BJ (cell line): ENCODE measurements at regions of chr15 and their contacts with region 1.

Region 1: GRCh38 chr15:74787251-74788041 is 5.6 kb downstream of the CSK start:
- DNase-seq: no peak
- H3K4me3 ChIP-seq: no peak overlapping the region
- H3K27me3 ChIP-seq: no peaks in the 10 kb centered on the region
- CTCF ChIP-seq: peak; percentile 71

Region 2: DNA sequence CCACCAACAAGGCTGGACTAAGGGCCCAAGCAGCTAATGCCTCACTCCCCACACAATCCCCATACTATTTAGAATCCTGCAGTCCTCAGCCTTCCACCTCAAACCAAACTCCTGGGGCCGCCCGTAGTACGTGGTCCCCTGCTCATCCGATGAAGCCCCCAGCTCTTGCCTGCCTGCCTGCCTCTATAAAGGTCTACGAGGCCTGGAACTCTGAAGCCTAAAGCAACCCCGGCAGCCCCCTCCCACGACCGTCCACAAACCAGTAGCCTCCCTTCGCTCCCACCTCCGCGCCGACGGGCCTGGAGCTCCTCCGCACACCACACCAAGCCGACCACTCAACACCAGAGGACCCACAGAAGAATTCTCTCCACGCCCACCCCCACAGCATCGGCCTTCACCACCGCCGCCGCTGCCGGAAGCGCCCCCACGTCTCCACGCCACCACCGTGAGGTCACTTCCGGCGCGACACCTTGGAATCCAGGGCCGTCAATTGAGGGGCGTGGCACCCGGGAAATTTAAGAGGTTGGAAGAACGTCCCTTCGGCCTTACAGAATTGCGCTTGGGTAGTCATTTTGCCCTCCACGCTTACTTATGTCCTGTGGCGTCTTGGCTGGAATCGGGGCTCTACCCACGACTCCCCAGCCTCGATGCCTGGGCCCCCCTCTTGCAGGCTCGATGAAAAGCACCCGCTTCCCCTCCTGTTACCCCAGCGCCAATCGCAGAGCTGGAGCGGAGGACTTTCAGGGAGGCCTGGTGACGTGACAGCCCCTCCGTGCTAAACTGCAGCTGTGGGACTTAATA is 91.6 kb before region 1 on chr15 and contains the start of gene EDC3:
- CTCF ChIA-PET with region 1: no interaction called
- POLR2A ChIA-PET with region 1: no interaction called
- DNase-seq: peak; percentile 21
- H3K4me3 ChIP-seq: peak within 1 kb of the TSS; percentile 61
- H3K27me3 ChIP-seq: no peaks in the 10 kb centered on the region
- CTCF ChIP-seq: no peak
- polyA plus RNA-seq, gene EDC3: 37.2 and 44.2 TPM in 2 replicates

Region 3: GRCh38 chr15:74799856-74800547 is 12.6 kb after region 1 on chr15:
- CTCF ChIA-PET with region 1: interaction called, 62 read pairs
- POLR2A ChIA-PET with region 1: no interaction called
- DNase-seq: no peak
- H3K4me3 ChIP-seq: no peak overlapping the region
- H3K27me3 ChIP-seq: no peaks in the 10 kb centered on the region
- CTCF ChIP-seq: peak; percentile 99